ENCODE measurements at regions of chr1 and their contacts with region 1.

Region 1: DNA sequence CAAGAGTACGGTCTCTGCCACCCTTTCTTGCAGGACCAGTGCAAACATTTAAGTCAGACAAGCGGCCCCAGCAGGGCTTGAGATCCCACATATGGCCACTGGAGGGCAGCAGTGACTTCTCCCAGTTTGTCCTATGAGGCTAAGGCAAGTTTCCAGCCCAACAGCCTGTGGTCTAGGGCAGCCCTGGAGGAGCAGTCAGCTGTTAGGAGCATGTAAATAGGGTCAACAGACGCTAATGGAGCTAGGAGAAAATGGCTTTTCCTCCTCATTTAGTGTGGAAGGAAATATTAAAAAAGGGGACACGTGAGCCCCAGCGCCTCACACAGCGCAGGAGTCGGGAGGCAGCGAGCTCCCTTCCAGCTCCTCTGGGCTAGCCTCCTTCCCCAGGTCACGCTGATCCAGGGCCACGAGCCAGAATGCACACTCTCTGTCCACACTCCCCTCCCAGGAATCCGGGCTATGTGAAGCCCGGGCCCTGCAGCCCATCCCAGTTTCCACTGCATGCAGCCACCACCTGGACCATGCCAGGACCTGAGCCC is 95.6 kb downstream of the LAMC2 start:
- DNase-seq: peak; percentile 54
- ATAC-seq: peak; percentile 91
- H3K4me3 ChIP-seq: no peak overlapping the region
- H3K27ac ChIP-seq: no peak overlapping the region
- H3K4me1 ChIP-seq: peaks cover 3% of the 10 kb centered on the region; the same call in 1 of the 2 replicates
- H3K27me3 ChIP-seq: no peaks in the 10 kb centered on the region
- CTCF ChIP-seq: peak; percentile 85 to 93 (median 88)
- EP300 ChIP-seq: no peak
- POLR2A ChIP-seq: no peak
- RAD21 ChIP-seq: peak; percentile 88

Region 2: GRCh38 chr1:182707122-182707521 is 574.5 kb before region 1 on chr1:
- CTCF ChIA-PET with region 1: no interaction called
- POLR2A ChIA-PET with region 1: no interaction called
- RAD21 ChIA-PET with region 1: no interaction called
- SMC1A ChIA-PET with region 1: no interaction called
- in situ Hi-C with region 1: no loop called
- intact Hi-C with region 1: no loop called
- DNase-seq: no peak
- ATAC-seq: no peak
- H3K4me3 ChIP-seq: no peak overlapping the region
- H3K27ac ChIP-seq: no peak overlapping the region
- H3K4me1 ChIP-seq: no peaks in the 10 kb centered on the region
- H3K27me3 ChIP-seq: no peaks in the 10 kb centered on the region
- CTCF ChIP-seq: no peak
- EP300 ChIP-seq: no peak
- POLR2A ChIP-seq: no peak
- RAD21 ChIP-seq: no peak

Region 3: DNA sequence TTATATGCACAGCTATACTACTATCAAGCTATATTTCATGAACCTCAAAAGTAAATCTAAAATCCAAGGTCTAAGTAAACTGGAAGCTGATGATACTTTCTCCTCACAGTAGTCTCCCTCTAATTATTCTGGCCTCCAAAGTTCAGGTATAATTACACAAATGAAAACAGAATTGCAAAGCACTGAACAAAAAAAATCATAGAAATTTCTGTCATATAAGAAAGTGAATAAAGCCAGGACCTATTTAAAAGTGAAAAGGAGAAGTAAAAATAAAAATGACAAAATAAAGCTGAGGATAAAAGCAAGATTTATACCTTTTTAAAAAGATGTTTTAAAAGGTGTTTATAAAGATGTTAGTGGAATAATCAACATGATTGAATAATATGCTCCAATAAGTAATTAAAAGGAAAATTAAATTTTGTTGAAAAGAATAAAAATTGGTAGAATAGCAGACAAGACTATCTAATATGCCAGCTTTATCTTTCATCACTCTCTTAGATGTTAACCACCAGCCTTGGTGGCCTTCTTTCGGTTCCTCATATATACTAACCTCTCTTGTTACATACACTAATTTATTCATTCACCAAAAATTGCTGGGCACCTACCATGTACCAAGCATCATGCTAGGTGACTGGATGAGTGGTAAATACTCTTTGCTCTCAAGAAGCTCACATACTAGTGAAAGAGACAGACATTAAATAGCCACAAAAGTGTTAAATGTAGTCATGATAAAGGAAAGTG is 353.8 kb before region 1 on chr1:
- CTCF ChIA-PET with region 1: no interaction called
- POLR2A ChIA-PET with region 1: no interaction called
- RAD21 ChIA-PET with region 1: no interaction called
- SMC1A ChIA-PET with region 1: no interaction called
- in situ Hi-C with region 1: no loop called
- intact Hi-C with region 1: no loop called
- DNase-seq: peak; percentile 5
- ATAC-seq: peak; percentile 98
- H3K4me3 ChIP-seq: no peak overlapping the region
- H3K27ac ChIP-seq: no peak overlapping the region
- H3K4me1 ChIP-seq: no peaks in the 10 kb centered on the region
- H3K27me3 ChIP-seq: no peaks in the 10 kb centered on the region; a peak in 1 of 4 replicates
- CTCF ChIP-seq: no peak
- EP300 ChIP-seq: no peak
- POLR2A ChIP-seq: no peak
- RAD21 ChIP-seq: no peak

Region 4: DNA sequence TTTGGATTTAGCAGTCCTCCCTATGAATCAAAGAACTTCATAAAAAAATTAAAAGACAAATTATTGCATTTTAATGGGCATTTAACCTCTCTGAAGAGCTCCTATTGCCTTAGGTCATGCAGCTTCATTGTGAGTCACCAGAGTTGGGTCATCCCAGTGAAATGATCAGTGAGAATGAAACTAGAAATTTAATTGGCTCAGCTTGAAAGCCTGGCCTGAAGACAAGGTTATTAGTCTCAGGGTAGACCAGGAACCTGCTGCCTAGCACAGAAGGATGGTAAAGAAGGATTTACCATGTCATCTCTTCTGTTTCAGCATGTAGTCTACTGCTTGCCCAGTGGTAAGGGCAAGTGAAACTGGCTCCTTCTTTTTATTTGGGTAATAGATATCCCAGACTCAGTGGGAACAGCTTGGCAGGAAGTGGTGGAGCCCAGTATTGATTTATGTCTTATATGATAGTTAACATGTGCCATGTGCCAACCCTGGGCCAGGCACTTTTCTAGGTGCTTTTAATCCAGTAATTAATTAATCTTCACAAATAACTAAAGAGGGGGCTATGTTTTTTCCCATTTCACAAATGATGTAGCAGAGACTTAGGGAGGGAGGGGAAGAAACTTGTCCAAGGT is 72.0 kb before region 1 on chr1:
- CTCF ChIA-PET with region 1: no interaction called
- POLR2A ChIA-PET with region 1: no interaction called
- RAD21 ChIA-PET with region 1: no interaction called
- SMC1A ChIA-PET with region 1: interaction called, 3 read pairs
- in situ Hi-C with region 1: no loop called
- intact Hi-C with region 1: loop called (anchors 10 kb)
- DNase-seq: no peak
- ATAC-seq: peak; percentile 97
- H3K4me3 ChIP-seq: no peak overlapping the region
- H3K27ac ChIP-seq: no peak overlapping the region
- H3K4me1 ChIP-seq: no peaks in the 10 kb centered on the region
- H3K27me3 ChIP-seq: no peaks in the 10 kb centered on the region; a peak in 1 of 4 replicates
- CTCF ChIP-seq: no peak
- EP300 ChIP-seq: no peak
- POLR2A ChIP-seq: no peak
- RAD21 ChIP-seq: no peak

Region 5: GRCh38 chr1:183291802-183292514 is 10.3 kb after region 1 on chr1:
- CTCF ChIA-PET with region 1: interaction called, 18 read pairs
- POLR2A ChIA-PET with region 1: interaction called, 3 read pairs
- RAD21 ChIA-PET with region 1: interaction called, 4 read pairs
- SMC1A ChIA-PET with region 1: interaction called, 9 read pairs
- in situ Hi-C with region 1: no loop called
- intact Hi-C with region 1: no loop called
- DNase-seq: no peak
- ATAC-seq: peak; percentile 23; the same call in 1 of the 3 replicates
- H3K4me3 ChIP-seq: no peak overlapping the region
- H3K27ac ChIP-seq: no peak overlapping the region
- H3K4me1 ChIP-seq: no peaks in the 10 kb centered on the region; the same call in 1 of the 2 replicates
- H3K27me3 ChIP-seq: peaks cover 0 to 2% of the 10 kb centered on the region in 2 experiments; a peak in 1 of 4 replicates
- CTCF ChIP-seq: no peak
- EP300 ChIP-seq: no peak
- POLR2A ChIP-seq: no peak
- RAD21 ChIP-seq: no peak

Region 6: GRCh38 chr1:183306317-183307042 is 24.9 kb after region 1 on chr1:
- CTCF ChIA-PET with region 1: interaction called, 48 read pairs
- POLR2A ChIA-PET with region 1: interaction called, 5 read pairs
- RAD21 ChIA-PET with region 1: interaction called, 50 read pairs
- SMC1A ChIA-PET with region 1: interaction called, 152 read pairs
- in situ Hi-C with region 1: no loop called
- intact Hi-C with region 1: no loop called
- DNase-seq: no peak
- ATAC-seq: peak; percentile 75
- H3K4me3 ChIP-seq: no peak overlapping the region
- H3K27ac ChIP-seq: no peak overlapping the region
- H3K4me1 ChIP-seq: peaks cover 12% of the 10 kb centered on the region
- H3K27me3 ChIP-seq: no peaks in the 10 kb centered on the region
- CTCF ChIP-seq: peak; percentile 38 to 48 (median 48); a peak in 5 of 6 replicates
- EP300 ChIP-seq: no peak
- POLR2A ChIP-seq: no peak
- RAD21 ChIP-seq: 0 out of 2 replicates have a peak, but pooled peaks have one; percentile 6

Region 7: DNA sequence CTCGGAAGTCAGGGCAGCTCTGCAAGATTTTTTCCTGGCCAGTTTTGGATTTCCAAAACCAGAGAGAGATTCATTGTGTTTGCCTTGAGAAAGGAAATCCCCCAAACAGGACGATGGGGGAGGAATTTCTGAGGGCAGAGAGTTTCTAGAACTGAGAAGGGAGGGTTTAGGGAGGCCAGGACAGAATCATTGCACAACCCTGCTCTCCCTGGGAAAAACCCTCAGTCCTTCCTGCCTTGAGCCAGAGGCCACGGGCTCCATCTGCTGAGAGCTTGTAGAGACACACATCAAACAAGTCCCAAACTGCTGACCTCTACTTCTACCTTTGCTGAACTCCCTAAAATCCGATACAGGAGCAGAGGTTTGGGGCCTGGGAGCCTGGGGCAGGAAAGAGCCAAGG is 36.8 kb after region 1 on chr1:
- CTCF ChIA-PET with region 1: interaction called, 146 read pairs
- POLR2A ChIA-PET with region 1: interaction called, 8 read pairs
- RAD21 ChIA-PET with region 1: interaction called, 114 read pairs
- SMC1A ChIA-PET with region 1: interaction called, 152 read pairs
- in situ Hi-C with region 1: no loop called
- intact Hi-C with region 1: loop called (anchors 1 kb)
- DNase-seq: peak; percentile 55
- ATAC-seq: peak; percentile 96
- H3K4me3 ChIP-seq: no peak overlapping the region
- H3K27ac ChIP-seq: no peak overlapping the region
- H3K4me1 ChIP-seq: peaks cover 6% of the 10 kb centered on the region
- H3K27me3 ChIP-seq: no peaks in the 10 kb centered on the region
- CTCF ChIP-seq: peak; percentile 44 to 92 (median 57); a peak in 5 of 6 replicates
- EP300 ChIP-seq: no peak
- POLR2A ChIP-seq: no peak
- RAD21 ChIP-seq: peak; percentile 82

Region 8: GRCh38 chr1:183339556-183340167 is 58.0 kb after region 1 on chr1:
- CTCF ChIA-PET with region 1: no interaction called
- POLR2A ChIA-PET with region 1: no interaction called
- RAD21 ChIA-PET with region 1: no interaction called
- SMC1A ChIA-PET with region 1: no interaction called
- in situ Hi-C with region 1: no loop called
- intact Hi-C with region 1: no loop called
- DNase-seq: no peak
- ATAC-seq: no peak
- H3K4me3 ChIP-seq: no peak overlapping the region
- H3K27ac ChIP-seq: no peak overlapping the region
- H3K4me1 ChIP-seq: no peaks in the 10 kb centered on the region
- H3K27me3 ChIP-seq: peaks cover 0 to 4% of the 10 kb centered on the region in 2 experiments; a peak in 2 of 4 replicates
- CTCF ChIP-seq: no peak
- EP300 ChIP-seq: no peak
- POLR2A ChIP-seq: no peak
- RAD21 ChIP-seq: no peak

Region 9: DNA sequence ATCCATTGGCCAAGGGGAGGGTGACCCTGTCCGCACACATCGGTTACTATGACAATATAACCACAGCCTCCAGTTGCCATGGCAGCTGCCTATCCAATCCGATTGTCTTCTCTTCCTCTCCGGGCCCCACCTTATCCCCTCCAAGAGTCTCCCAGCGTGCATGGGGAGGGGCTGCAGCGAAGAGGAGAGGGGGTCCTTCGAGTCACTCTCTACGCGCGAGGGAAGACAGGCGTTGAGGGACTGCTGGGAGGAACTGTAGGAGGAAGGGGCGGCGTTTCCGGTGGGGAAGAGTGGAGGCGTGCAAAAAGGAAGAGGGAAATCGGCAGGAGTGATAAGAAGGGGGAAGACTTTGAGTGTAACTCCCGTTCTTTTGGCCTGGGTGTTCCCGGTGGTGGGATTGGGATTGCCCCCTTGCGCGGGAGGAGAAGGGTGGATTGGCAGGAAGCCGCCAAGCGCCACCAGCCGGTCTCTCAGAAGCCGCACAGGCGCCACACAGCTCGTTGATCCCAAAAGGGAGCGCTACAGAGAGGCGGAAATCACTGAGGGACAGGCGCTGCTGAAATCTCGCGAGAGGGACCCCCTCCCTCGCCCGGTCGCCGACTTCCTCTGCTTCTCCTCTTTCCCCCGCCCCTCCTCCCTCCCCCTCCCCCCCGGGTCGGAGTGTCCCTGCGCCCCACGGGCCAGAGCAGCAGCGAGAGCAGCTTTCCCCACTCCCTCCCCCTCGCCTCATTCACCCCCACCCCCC is 190.3 kb after region 1 on chr1:
- CTCF ChIA-PET with region 1: interaction called, 6 read pairs
- POLR2A ChIA-PET with region 1: no interaction called
- RAD21 ChIA-PET with region 1: interaction called, 3 read pairs
- SMC1A ChIA-PET with region 1: interaction called, 3 read pairs
- in situ Hi-C with region 1: no loop called
- intact Hi-C with region 1: loop called (anchors 5 kb)
- DNase-seq: peak; percentile 90
- ATAC-seq: peak; percentile 69
- H3K4me3 ChIP-seq: peak overlapping the region; percentile 87
- H3K27ac ChIP-seq: peak overlapping the region; percentile 99
- H3K4me1 ChIP-seq: peaks cover 8% of the 10 kb centered on the region
- H3K27me3 ChIP-seq: no peaks in the 10 kb centered on the region
- CTCF ChIP-seq: peak in 2 of 3 experiments; percentile 21 to 38; a peak in 3 of 6 replicates
- EP300 ChIP-seq: no peak
- POLR2A ChIP-seq: peak; percentile 56
- RAD21 ChIP-seq: no peak

Region 10: GRCh38 chr1:183543619-183544204 is 262.1 kb after region 1 on chr1:
- CTCF ChIA-PET with region 1: interaction called, 3 read pairs
- POLR2A ChIA-PET with region 1: no interaction called
- RAD21 ChIA-PET with region 1: no interaction called
- SMC1A ChIA-PET with region 1: interaction called, 3 read pairs
- in situ Hi-C with region 1: loop called (anchors 10 kb)
- intact Hi-C with region 1: no loop called
- DNase-seq: peak; percentile 19
- ATAC-seq: peak; percentile 95
- H3K4me3 ChIP-seq: no peak overlapping the region
- H3K27ac ChIP-seq: no peak overlapping the region
- H3K4me1 ChIP-seq: no peaks in the 10 kb centered on the region
- H3K27me3 ChIP-seq: no peaks in the 10 kb centered on the region
- CTCF ChIP-seq: peak; percentile 65 to 66 (median 65)
- EP300 ChIP-seq: no peak
- POLR2A ChIP-seq: no peak
- RAD21 ChIP-seq: peak; percentile 71

Measured in GM12878 (cell line).